Gastrocnemius medialis (tissue), 4 donors: ENCODE measurements at regions of chr5 and their contacts with region 1.

Region 1: DNA sequence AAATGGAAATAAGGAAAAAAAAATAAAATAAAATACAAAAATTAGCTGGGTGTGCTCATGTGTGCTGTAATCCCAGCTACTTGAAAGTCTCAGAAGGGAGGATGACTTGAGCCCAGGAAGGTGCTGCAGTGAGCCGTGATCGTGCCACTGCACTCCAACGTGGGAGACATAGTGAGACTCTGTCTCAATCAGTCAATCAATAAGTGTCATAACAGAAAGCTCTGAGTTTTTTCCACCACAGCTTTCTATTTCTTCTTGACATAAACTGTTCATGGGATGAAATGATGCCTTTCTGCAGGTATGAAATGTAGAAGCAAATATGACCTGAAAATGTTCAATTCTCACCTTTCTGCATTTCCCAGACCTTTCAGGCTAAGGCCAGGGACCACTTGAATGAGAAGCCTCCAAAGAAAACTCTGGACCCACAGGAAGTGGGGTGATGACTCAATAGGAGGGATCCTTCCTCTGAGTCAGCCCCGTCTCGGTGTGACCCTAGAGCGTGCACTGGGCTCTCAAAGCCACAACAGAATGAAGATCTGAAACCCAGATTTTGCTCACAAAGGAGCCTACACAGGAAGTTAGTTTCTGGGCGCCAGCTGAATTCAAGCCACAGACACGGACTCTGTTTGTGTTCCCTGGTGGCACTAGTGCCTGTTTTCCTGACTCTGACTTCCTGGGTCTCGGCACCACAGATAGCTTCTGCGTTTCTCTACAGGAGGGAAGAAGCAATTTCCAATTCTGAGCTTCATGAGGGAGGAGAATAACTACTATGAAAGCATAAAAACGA is 62.0 kb downstream of the ANKH start:
- DNase-seq: peak; percentile 31 to 53
- ATAC-seq: peak; percentile 46 to 49
- H3K4me3 ChIP-seq: peak overlapping the region in 1 of 4 donors; percentile 19
- H3K27ac ChIP-seq: peak overlapping the region; percentile 26 to 58 (median 52)
- H3K4me1 ChIP-seq: peaks cover 58 to 59% of the 10 kb centered on the region in 2 donors
- H3K27me3 ChIP-seq: no peaks in the 10 kb centered on the region
- CTCF ChIP-seq: no peak
- POLR2A ChIP-seq: no peak

Region 2: DNA sequence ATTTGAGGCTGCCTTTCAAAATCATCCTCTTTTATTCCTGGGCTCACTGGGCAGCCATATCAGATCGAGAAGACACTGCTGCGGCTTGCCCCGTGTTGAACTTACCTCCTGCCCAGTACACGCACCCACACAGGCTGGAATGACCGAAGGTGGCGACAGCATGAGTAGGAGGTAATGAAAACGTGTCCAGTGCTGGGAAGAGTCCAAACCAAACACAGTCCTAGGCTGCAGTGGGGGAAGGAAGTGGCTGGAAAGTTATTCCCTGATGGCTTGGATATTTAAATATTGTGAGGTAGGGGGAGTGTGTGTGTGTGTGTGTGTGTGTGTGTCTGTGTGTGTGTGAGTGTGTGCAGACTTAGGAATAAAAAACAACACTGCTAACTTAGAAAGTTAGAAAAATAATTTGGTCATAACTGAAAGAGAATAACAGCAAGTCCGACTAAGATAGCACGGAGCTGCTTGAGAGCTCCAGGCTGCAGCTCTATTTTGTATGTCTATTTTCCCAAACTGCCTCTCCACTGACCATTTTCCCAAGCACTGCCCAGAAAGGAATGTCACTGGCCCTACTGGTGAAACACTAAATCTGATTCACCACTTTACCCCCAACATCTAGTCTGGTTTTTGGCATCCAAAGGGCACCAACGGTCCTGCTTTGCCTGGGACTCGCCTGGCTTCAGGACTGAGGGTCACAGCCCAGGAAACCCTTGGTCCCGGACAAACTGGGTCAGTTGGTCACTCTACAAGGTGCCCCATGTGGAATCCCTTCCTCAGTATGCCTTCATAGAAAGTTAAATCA is 20.8 kb after region 1 on chr5:
- in situ Hi-C with region 1: no loop called
- intact Hi-C with region 1: loop called (anchors 2 kb)
- DNase-seq: no peak
- ATAC-seq: peak in 1 of 2 donors; percentile 37
- H3K4me3 ChIP-seq: no peak overlapping the region
- H3K27ac ChIP-seq: peak overlapping the region; percentile 41 to 88 (median 84)
- H3K4me1 ChIP-seq: peaks cover 56 to 63% of the 10 kb centered on the region in 2 donors
- H3K27me3 ChIP-seq: no peaks in the 10 kb centered on the region
- CTCF ChIP-seq: no peak
- POLR2A ChIP-seq: no peak